ENCODE measurements at regions of chr16 and their contacts with region 1.

Region 1: GRCh38 chr16:3983081-3983520 is 102.6 kb upstream of the CREBBP start:
- DNase-seq: peak in 12 of 14 experiments; percentile 12 to 72 (median 28)
- ATAC-seq: peak; percentile 76
- H3K4me3 ChIP-seq: no peak overlapping the region
- H3K4me3 Mint-ChIP-seq: no peak overlapping the region
- H3K27ac ChIP-seq: no peak overlapping the region
- H3K27ac Mint-ChIP-seq: no peak overlapping the region
- H3K4me1 ChIP-seq: peaks cover 6% of the 10 kb centered on the region
- H3K4me1 Mint-ChIP-seq: no peaks in the 10 kb centered on the region
- H3K27me3 ChIP-seq: no peaks in the 10 kb centered on the region
- H3K27me3 Mint-ChIP-seq: no peaks in the 10 kb centered on the region
- CTCF ChIP-seq: peak; percentile 36

Region 2: GRCh38 chr16:4402439-4403132 is 419.5 kb after region 1 on chr16:
- CTCF ChIA-PET with region 1: no interaction called
- POLR2A ChIA-PET with region 1: no interaction called
- intact Hi-C with region 1: loop called in 1 of 2 experiments (anchors 2 kb)
- DNase-seq: peak in 13 of 14 experiments; percentile 47 to 78 (median 64)
- ATAC-seq: peak; percentile 39
- H3K4me3 ChIP-seq: no peak overlapping the region
- H3K4me3 Mint-ChIP-seq: peak overlapping the region; percentile 20
- H3K27ac ChIP-seq: no peak overlapping the region
- H3K27ac Mint-ChIP-seq: peak overlapping the region; percentile 84
- H3K4me1 ChIP-seq: peaks cover 23% of the 10 kb centered on the region
- H3K4me1 Mint-ChIP-seq: peaks cover 22% of the 10 kb centered on the region
- H3K27me3 ChIP-seq: no peaks in the 10 kb centered on the region
- H3K27me3 Mint-ChIP-seq: no peaks in the 10 kb centered on the region
- CTCF ChIP-seq: peak; percentile 77